ENCODE measurements at regions of chr5 and their contacts with region 1.

Region 1: DNA sequence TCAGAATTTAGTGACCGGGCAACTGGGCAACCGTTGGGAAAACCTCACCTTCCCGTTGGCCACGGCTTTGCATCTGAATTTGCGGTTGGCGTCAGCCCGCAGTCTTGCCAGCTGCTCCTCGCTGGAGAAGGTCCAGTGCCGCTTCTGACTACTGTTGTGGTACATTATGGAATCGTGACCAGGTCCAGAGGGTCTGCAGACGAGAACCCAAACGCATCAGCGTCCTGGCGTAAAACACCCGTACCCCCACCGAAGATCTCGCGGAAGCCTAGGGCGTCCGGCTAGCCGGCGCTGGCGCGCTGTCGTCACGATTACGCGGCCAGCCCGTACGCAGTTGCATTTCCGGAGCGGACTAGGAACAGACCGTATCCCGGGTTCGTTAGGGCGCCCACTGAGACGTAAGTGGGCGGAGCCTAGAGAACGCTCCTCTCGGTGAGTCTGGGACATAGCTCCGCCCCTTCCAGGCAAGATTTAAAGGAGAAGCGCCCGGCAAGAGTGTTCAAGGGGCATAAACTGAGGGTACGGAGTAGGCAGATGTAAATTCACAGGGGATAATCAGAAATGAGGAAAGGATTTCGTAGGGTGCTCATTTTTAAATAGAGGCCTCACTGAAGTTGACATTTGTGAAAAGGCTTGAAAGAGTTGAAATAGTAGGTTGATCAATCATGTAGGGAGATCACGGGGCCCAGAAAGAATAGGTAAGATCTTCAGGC is at the start of gene CCNH:
- DNase-seq: peak; percentile 91 to 99 (median 95)
- ATAC-seq: peak; percentile 95
- H3K4me3 ChIP-seq: peak within 1 kb of the TSS; percentile 95
- H3K4me3 Mint-ChIP-seq: peak within 1 kb of the TSS; percentile 97
- H3K27ac ChIP-seq: peak within 1 kb of the TSS; percentile 90 to 98
- H3K27ac Mint-ChIP-seq: peak within 1 kb of the TSS; percentile 96
- H3K4me1 ChIP-seq: peaks cover 19% of the 10 kb centered on the region
- H3K4me1 Mint-ChIP-seq: peaks cover 50% of the 10 kb centered on the region
- H3K27me3 ChIP-seq: no peaks in the 10 kb centered on the region
- H3K27me3 Mint-ChIP-seq: no peaks in the 10 kb centered on the region
- CTCF ChIP-seq: no peak
- total RNA-seq, gene CCNH: 309 to 311 TPM

Region 2: GRCh38 chr5:86617756-86618576 is 794.8 kb before region 1 on chr5 and contains the start of gene COX7C:
- CTCF ChIA-PET with region 1: no interaction called
- POLR2A ChIA-PET with region 1: interaction called, 9 read pairs
- intact Hi-C with region 1: loop called (anchors 2 to 5 kb)
- DNase-seq: peak; percentile 84 to 98 (median 90)
- ATAC-seq: peak; percentile 93
- H3K4me3 ChIP-seq: peak within 1 kb of the TSS; percentile 79
- H3K4me3 Mint-ChIP-seq: peak within 1 kb of the TSS; percentile 93
- H3K27ac ChIP-seq: peak within 1 kb of the TSS; percentile 92 to 94
- H3K27ac Mint-ChIP-seq: peak within 1 kb of the TSS; percentile 98
- H3K4me1 ChIP-seq: peaks cover 14% of the 10 kb centered on the region
- H3K4me1 Mint-ChIP-seq: peaks cover 39% of the 10 kb centered on the region
- H3K27me3 ChIP-seq: peaks cover 0 to 8% of the 10 kb centered on the region in 2 experiments
- H3K27me3 Mint-ChIP-seq: peaks cover 17% of the 10 kb centered on the region
- CTCF ChIP-seq: no peak
- total RNA-seq, gene COX7C: 467 to 482 TPM

Region 3: DNA sequence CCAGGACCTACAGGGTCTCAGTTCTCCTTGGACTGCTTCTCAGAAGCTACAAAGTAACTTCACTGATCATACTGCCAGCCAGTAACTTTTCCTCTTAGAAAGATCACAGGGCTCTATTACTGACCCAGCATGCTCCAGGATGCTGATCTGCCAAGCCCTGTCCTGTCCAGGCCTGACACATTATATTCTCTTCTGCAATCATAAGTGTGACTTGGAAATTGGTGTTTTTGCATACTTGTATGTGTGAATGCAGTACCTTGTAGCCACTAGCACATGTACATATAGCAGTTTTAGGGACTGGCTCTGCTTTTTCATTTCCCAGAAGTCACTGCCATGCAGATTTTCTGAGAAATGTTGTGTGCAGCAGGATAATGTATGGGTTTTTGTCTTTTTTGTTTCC is 40.1 kb after region 1 on chr5:
- CTCF ChIA-PET with region 1: no interaction called
- POLR2A ChIA-PET with region 1: no interaction called
- intact Hi-C with region 1: no loop called
- DNase-seq: no peak
- ATAC-seq: no peak
- H3K4me3 ChIP-seq: no peak overlapping the region
- H3K4me3 Mint-ChIP-seq: no peak overlapping the region
- H3K27ac ChIP-seq: no peak overlapping the region
- H3K27ac Mint-ChIP-seq: no peak overlapping the region
- H3K4me1 ChIP-seq: no peaks in the 10 kb centered on the region
- H3K4me1 Mint-ChIP-seq: no peaks in the 10 kb centered on the region
- H3K27me3 ChIP-seq: no peaks in the 10 kb centered on the region
- H3K27me3 Mint-ChIP-seq: peaks cover 28% of the 10 kb centered on the region
- CTCF ChIP-seq: no peak

Measured in CD4-positive, alpha-beta T cell (primary cell).